B cell (primary cell): ENCODE measurements at regions of chr20 and their contacts with region 1.

Region 1: GRCh38 chr20:35447082-35447789 is 8.2 kb upstream of the CEP250 start:
- DNase-seq: peak; percentile 84
- ATAC-seq: peak; percentile 99
- H3K4me3 ChIP-seq: peak overlapping the region in 3 of 5 experiments; percentile 30 to 52 (median 31)
- H3K4me3 Mint-ChIP-seq: peak overlapping the region; percentile 87
- H3K27ac ChIP-seq: no peak overlapping the region
- H3K27ac Mint-ChIP-seq: no peak overlapping the region
- H3K4me1 ChIP-seq: peaks cover 0 to 3% of the 10 kb centered on the region in 2 donors
- H3K4me1 Mint-ChIP-seq: peaks cover 6% of the 10 kb centered on the region
- H3K27me3 ChIP-seq: no peaks in the 10 kb centered on the region
- H3K27me3 Mint-ChIP-seq: peaks cover 8% of the 10 kb centered on the region
- CTCF ChIP-seq: peak; percentile 97

Region 2: DNA sequence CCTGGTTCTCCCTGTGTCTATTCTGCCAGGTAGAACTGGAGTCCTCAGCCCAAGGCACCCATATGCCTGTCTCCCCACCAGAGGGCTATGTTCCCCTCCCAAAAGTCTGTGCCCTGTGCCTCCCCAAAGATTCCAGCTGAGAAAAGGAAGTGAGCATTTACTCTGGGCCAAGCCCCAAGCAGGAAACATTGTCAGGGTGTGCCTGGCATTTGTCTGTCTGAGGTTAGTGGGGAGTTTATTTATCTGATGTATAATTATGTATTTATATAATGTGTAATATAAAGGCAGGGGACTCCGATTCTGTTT is 14.9 kb before region 1 on chr20:
- CTCF ChIA-PET with region 1: interaction called, 13 read pairs
- POLR2A ChIA-PET with region 1: no interaction called
- intact Hi-C with region 1: no loop called
- DNase-seq: no peak
- ATAC-seq: no peak
- H3K4me3 ChIP-seq: no peak overlapping the region
- H3K4me3 Mint-ChIP-seq: no peak overlapping the region
- H3K27ac ChIP-seq: no peak overlapping the region
- H3K27ac Mint-ChIP-seq: no peak overlapping the region
- H3K4me1 ChIP-seq: no peaks in the 10 kb centered on the region
- H3K4me1 Mint-ChIP-seq: no peaks in the 10 kb centered on the region
- H3K27me3 ChIP-seq: no peaks in the 10 kb centered on the region
- H3K27me3 Mint-ChIP-seq: peaks cover 3% of the 10 kb centered on the region
- CTCF ChIP-seq: no peak

Region 3: DNA sequence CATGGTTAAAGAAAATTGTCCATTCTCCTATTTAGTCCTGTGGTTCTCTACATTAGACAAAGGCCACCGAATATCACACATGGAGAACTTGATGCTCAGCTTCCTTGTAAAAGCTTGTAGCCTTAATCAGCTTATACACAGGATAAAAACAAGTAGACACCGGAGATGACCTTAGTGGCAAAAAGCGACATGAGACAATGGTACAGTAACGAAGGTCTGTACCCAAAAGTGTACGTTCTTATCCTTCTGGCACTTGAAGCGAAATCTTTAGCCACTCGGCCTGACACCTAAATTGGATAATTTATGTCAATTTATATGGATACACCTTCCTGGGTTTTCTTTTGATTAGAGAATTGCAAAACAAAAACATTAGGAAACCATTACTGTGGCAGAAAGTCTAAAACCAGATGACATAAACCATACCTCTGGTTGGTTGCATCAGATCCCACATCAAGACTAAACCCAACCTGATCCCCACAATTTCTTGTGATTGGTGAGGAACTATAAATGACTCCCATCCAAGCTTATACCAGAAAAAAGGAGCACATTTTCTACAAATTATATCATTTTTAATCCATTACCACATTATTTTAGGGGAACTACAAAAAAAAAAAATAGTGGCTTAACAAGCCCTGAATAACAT is 288.7 kb after region 1 on chr20:
- CTCF ChIA-PET with region 1: no interaction called
- POLR2A ChIA-PET with region 1: interaction called, 13 read pairs
- intact Hi-C with region 1: no loop called
- DNase-seq: no peak
- ATAC-seq: no peak
- H3K4me3 ChIP-seq: no peak overlapping the region
- H3K4me3 Mint-ChIP-seq: no peak overlapping the region
- H3K27ac ChIP-seq: no peak overlapping the region
- H3K27ac Mint-ChIP-seq: no peak overlapping the region
- H3K4me1 ChIP-seq: peaks cover 34 to 43% of the 10 kb centered on the region in 2 donors
- H3K4me1 Mint-ChIP-seq: peaks cover 56% of the 10 kb centered on the region
- H3K27me3 ChIP-seq: no peaks in the 10 kb centered on the region
- H3K27me3 Mint-ChIP-seq: no peaks in the 10 kb centered on the region
- CTCF ChIP-seq: no peak